Activated CD8-positive, alpha-beta T cell treated with anti-CD3 and anti-CD28 coated beads for 36 hours (primary cell): ENCODE measurements at regions of chr3 and their contacts with region 1.

Region 1: DNA sequence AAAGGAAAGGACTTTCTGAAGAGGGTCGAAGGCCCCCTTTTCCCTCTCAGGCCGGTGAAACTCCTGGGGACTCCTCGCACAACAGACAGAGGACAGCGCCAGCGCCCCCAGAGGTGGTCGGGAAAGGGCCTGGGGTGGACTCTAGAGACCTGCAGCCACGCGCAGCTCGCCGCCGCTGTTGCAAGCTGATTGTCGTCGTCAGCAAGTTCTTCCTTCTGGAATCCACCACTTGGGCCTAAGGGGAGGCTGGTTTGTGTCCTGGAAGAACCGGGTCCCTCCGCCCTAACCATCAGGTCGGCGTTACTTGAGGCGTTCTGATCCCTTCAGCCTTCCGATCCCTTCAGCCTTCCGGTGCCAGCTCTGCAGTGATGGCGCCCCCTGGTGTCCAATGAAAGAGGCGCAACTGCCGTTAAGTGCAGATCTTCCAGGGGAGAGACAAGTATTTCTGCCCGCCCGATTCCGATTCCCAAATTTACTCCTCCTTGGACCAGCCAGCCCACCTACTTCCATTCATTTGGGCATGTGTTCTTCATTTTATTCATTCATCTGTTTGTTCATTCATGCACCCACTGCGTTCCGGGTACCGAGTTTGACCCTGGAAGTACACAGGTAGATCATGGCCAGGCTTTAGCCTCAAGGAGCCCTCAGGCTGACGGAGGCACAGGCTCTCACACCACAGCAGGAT is 77.2 kb upstream of the SLC6A11 start:
- DNase-seq: peak; percentile 80
- ATAC-seq: peak; percentile 74
- H3K4me3 Mint-ChIP-seq: peak overlapping the region; percentile 31
- H3K27ac Mint-ChIP-seq: no peak overlapping the region
- H3K4me1 Mint-ChIP-seq: peaks cover 4% of the 10 kb centered on the region
- H3K27me3 Mint-ChIP-seq: peaks cover 39% of the 10 kb centered on the region
- CTCF ChIP-seq: peak; percentile 83

Region 2: GRCh38 chr3:10344147-10344943 is 394.5 kb before region 1 on chr3:
- CTCF ChIA-PET with region 1: interaction called, 33 read pairs
- POLR2A ChIA-PET with region 1: no interaction called
- intact Hi-C with region 1: loop called (anchors 2 kb)
- DNase-seq: peak; percentile 68
- ATAC-seq: peak; percentile 73
- H3K4me3 Mint-ChIP-seq: no peak overlapping the region
- H3K27ac Mint-ChIP-seq: no peak overlapping the region
- H3K4me1 Mint-ChIP-seq: no peaks in the 10 kb centered on the region
- H3K27me3 Mint-ChIP-seq: no peaks in the 10 kb centered on the region
- CTCF ChIP-seq: peak; percentile 95

Region 3: GRCh38 chr3:10417849-10418248 is 321.0 kb before region 1 on chr3:
- CTCF ChIA-PET with region 1: interaction called, 35 read pairs
- POLR2A ChIA-PET with region 1: no interaction called
- intact Hi-C with region 1: loop called (anchors 5 kb)
- DNase-seq: peak; percentile 27
- ATAC-seq: no peak
- H3K4me3 Mint-ChIP-seq: no peak overlapping the region
- H3K27ac Mint-ChIP-seq: no peak overlapping the region
- H3K4me1 Mint-ChIP-seq: peaks cover 6% of the 10 kb centered on the region
- H3K27me3 Mint-ChIP-seq: no peaks in the 10 kb centered on the region
- CTCF ChIP-seq: peak; percentile 42

Region 4: DNA sequence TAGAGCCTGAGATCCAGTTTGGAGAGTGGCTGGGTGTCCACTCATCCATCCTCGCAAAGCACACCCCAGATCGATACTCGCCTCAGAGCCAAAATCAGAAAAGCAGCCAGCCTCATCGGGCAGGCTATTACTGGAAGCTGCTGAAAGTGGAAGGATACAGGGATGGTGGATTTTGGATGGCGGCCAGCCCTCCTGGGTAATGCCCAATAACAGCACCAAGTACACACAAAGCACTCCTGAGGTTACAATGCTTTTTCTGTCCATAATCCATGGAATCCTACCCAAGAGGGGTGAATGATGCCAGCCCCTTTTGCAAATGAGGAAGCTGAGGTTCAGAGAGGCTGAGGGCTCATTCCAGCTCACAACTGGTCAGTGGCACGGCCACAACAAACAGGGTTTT is 15.9 kb before region 1 on chr3:
- CTCF ChIA-PET with region 1: interaction called, 13 read pairs
- POLR2A ChIA-PET with region 1: no interaction called
- intact Hi-C with region 1: no loop called
- DNase-seq: no peak
- ATAC-seq: no peak
- H3K4me3 Mint-ChIP-seq: no peak overlapping the region
- H3K27ac Mint-ChIP-seq: no peak overlapping the region
- H3K4me1 Mint-ChIP-seq: no peaks in the 10 kb centered on the region
- H3K27me3 Mint-ChIP-seq: peaks cover 4% of the 10 kb centered on the region
- CTCF ChIP-seq: no peak